ENCODE measurements at regions of chr2 and their contacts with region 1.

Region 1: DNA sequence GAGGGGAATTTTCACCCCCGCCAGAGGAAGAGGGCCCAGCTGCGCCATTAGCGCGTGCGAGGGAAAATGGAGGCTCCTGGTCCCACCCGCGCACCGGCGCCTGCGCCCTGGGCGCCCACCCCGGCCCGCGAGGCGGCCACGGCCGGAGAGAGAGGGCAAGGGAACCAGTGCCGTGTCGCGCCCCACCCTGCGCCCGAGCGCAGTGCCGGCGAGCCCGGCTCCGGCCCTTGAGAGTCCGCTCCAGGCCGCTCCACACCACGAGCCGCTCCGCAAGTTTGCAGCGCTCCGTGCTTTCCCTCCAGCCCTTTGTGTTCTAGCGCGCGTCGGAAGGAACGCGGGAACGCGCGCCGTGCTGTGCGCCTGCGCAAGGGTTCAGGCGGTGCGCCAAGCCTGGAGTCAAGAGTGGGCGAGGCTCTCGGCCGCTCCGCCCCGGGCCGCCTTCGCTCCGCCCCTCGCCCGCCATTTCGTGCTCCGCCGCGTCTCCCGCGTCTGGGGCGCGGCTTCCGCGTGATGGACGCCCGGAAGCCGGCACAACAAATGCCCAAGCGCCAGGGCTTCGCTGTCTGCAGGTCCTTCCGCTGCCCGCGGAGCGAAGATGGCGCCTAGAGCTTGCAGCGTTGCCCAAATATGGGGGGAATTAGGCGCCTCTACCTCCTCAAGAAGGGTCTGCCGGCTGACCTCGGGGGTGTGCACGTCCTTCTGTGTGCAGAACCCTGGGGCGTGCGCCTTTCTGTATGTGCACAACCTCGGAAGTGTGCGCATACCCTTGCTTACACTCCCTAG is 46.1 kb upstream of the PTMA start:
- DNase-seq: peak; percentile 96
- H3K4me3 Mint-ChIP-seq: peak overlapping the region; percentile 74
- H3K27ac Mint-ChIP-seq: peak overlapping the region; percentile 92
- H3K4me1 Mint-ChIP-seq: peaks cover 17% of the 10 kb centered on the region
- H3K27me3 Mint-ChIP-seq: no peaks in the 10 kb centered on the region

Region 2: GRCh38 chr2:231058761-231059550 is 603.3 kb before region 1 on chr2:
- CTCF ChIA-PET with region 1: no interaction called
- intact Hi-C with region 1: no loop called
- DNase-seq: no peak
- H3K4me3 Mint-ChIP-seq: peak overlapping the region; percentile 97
- H3K27ac Mint-ChIP-seq: peak overlapping the region; percentile 48
- H3K4me1 Mint-ChIP-seq: peaks cover 31% of the 10 kb centered on the region
- H3K27me3 Mint-ChIP-seq: no peaks in the 10 kb centered on the region

Region 3: DNA sequence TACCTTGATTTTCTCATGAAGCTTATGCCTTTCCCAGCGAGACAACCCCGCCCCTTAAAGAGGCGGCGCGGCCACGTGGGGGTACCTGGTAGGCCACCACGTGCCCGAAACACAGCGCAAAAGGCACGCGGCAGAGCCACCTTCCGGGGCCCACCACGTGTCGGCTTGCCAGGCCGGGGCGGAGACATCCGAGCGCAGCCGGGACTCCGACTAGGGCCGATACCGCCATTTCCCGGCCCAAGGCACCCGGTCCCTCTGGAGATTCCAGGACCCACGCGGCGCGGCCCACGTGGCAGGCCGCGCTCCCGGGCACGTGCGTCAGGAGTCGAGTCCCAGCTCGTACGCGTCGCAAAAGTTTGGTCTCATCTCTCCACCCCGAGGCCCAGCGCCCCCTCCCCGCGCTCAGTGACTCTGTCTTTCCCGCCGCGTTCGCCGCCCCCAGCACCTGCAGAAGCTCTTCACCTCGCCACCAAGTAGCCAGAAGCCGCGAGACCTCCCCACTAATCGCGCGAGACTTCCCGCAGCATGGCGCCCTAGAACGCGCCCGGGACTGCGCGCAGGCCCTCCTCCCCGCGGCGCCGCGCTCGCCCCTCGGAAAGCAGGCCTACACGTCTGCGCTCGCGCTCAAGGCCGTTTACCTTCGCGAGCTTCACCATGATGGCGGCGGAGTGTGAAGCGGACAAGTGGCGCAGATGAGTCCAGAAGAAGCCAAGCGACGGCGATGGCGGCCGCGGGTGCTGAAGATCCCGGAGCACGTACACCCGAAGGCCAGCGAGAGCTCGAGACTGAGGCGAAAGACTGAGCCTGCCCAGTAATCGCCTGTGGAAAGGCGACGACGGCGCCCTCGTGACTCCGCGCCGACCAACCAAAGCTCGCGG is 198.3 kb before region 1 on chr2 and contains the start of gene NCL:
- CTCF ChIA-PET with region 1: no interaction called
- intact Hi-C with region 1: loop called (anchors 1 kb)
- DNase-seq: peak; percentile 87
- H3K4me3 Mint-ChIP-seq: peak within 1 kb of the TSS; percentile 97
- H3K27ac Mint-ChIP-seq: peak within 1 kb of the TSS; percentile 98
- H3K4me1 Mint-ChIP-seq: peaks cover 46% of the 10 kb centered on the region
- H3K27me3 Mint-ChIP-seq: no peaks in the 10 kb centered on the region
- total RNA-seq, gene NCL: 908 to 911 TPM

Region 4: DNA sequence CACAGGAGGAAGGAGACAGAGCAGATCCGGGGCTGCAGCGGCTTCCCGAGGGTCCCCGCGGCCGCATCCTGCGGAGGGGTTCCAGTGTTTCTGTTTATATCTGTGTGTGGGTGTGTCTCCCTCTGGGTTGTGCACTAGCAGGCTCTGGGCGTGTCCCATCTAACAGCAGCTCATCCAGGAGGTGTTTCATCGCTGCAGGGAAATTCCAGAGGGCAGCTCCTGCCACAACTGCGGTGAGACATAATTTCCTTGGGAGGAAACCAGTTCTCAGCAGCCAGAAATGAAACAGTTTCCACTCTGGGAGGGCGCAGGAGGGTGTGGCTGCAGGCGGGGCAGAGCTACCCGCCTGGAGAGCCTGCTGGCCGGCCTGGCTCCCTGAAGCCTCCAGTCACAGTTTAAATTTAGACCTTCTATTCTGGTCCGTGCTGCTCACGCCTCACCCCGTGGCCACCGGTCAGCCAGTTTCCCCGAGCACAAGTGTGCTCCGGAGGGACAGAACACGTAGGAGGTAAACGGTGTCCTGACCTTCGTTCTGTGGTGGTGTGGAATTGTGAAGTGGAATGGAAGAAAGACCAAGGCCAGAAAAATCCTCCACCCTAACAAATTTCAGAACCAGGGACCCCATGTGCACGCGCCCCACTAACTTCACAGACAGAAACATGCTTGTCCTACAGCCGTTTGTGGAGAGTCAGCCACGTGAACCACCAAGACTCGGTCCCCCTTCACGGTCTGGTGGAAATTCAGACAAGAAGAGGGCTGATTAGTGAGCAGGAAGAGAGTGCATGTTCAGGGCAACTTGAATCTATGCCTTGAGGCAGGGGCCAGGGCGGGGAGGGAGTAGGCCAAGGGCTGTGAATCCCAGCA is 19.4 kb before region 1 on chr2:
- CTCF ChIA-PET with region 1: interaction called, 6 read pairs
- intact Hi-C with region 1: loop called (anchors 2 kb)
- DNase-seq: peak; percentile 89
- H3K4me3 Mint-ChIP-seq: peak overlapping the region; percentile 62
- H3K27ac Mint-ChIP-seq: peak overlapping the region; percentile 57
- H3K4me1 Mint-ChIP-seq: peaks cover 18% of the 10 kb centered on the region
- H3K27me3 Mint-ChIP-seq: no peaks in the 10 kb centered on the region

Region 5: DNA sequence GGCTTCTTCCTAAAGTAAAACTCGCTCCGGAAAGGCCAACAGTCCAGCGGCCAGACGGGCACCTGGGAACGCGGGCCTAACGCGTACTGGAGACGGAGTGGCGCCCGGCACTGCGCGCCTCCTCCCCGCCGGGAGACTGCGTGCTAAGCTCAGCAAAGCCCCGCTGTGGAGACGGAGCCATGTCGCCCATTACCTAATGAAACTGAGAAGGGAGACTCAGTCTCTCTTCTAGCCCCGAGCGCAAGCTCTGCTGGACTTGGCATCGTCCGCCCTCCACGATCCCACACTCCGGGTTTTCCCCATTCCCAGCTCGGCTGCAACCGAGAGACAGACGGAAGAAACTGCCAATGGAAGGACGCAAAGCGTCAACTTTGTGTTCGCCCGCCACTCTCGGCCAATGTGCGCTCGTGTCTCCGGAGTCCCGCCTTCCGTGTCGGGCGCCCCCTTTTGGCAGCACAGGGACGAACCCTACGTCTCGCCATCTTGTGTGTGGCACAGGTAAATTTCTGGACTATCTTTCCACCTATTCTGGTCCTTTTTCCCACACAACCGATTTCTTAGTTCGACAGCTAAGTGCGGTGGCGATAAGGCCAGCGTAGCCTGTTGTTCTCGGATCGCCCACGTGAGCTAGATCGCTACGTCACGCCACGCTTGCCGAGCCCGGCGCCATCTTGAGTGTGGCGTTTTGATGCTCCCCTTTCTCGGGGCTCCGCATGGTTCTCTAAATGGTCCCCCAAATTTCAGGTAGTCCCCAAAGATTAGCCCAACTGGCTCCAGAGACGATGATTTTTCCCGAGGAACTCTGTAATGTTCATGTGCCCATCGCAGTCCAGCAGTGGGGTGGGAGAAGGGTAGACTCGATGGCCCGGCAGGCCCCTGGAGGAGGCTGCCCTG is 44.8 kb after region 1 on chr2:
- CTCF ChIA-PET with region 1: interaction called, 4 read pairs
- intact Hi-C with region 1: loop called (anchors 1 kb)
- DNase-seq: peak; percentile 98
- H3K4me3 Mint-ChIP-seq: peak overlapping the region; percentile 91
- H3K27ac Mint-ChIP-seq: peak overlapping the region; percentile 100
- H3K4me1 Mint-ChIP-seq: peaks cover 18% of the 10 kb centered on the region
- H3K27me3 Mint-ChIP-seq: peaks cover 2% of the 10 kb centered on the region

Region 6: GRCh38 chr2:232600053-232600773 is 938.0 kb after region 1 on chr2:
- CTCF ChIA-PET with region 1: no interaction called
- intact Hi-C with region 1: no loop called
- DNase-seq: no peak
- H3K4me3 Mint-ChIP-seq: no peak overlapping the region
- H3K27ac Mint-ChIP-seq: no peak overlapping the region
- H3K4me1 Mint-ChIP-seq: no peaks in the 10 kb centered on the region
- H3K27me3 Mint-ChIP-seq: no peaks in the 10 kb centered on the region

Measured in activated naive CD4-positive, alpha-beta T cell treated with anti-CD3 and anti-CD28 coated beads for 36 hours (primary cell).